Calu3 (cell line): ENCODE measurements at regions of chr2 and their contacts with region 1.

Region 1: DNA sequence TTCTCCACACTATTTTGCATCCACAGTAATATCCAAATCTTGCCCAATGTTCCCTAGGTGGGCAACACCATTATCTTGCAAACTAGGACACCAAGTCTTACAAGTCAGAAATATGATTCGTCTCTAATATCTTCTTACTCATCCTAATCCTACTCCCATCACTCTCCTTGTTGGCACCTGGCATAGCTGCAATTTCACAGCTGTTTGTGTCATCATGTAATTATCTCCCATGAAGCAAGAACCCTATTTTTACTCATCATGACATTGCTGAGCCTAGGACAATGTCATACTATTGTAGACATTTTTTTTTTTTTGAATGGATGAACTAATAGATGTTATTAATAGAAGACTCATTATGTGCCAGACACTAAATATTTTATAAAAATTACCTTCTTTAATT is 91.3 kb upstream of the CCDC141 start:
- DNase-seq: no peak
- H3K4me3 Mint-ChIP-seq: no peak overlapping the region
- H3K27ac Mint-ChIP-seq: no peak overlapping the region
- H3K4me1 Mint-ChIP-seq: no peaks in the 10 kb centered on the region
- H3K27me3 Mint-ChIP-seq: no peaks in the 10 kb centered on the region
- CTCF ChIP-seq: no peak

Region 2: DNA sequence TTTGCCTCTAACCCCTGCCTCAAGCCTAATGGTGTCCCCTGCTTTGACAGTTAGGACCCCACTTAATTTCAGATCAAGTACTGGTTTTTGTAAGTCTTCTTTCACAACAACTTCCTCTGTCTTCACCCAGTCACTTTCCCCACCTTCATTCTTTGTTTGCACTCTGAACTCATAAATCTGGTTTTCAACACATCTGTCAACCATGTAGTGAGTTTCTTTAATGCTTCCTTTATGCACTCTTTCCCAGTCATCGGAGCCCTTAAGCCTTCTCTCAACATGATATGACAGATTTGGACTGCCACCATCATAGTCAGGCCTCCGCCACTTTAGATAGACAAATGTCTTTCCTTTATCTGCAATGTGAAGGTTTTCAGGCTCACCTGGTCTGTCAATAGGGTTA is 551.9 kb before region 1 on chr2:
- CTCF ChIA-PET with region 1: no interaction called
- intact Hi-C with region 1: no loop called
- DNase-seq: no peak
- H3K4me3 Mint-ChIP-seq: no peak overlapping the region
- H3K27ac Mint-ChIP-seq: no peak overlapping the region
- H3K4me1 Mint-ChIP-seq: no peaks in the 10 kb centered on the region
- H3K27me3 Mint-ChIP-seq: no peaks in the 10 kb centered on the region
- CTCF ChIP-seq: no peak

Region 3: DNA sequence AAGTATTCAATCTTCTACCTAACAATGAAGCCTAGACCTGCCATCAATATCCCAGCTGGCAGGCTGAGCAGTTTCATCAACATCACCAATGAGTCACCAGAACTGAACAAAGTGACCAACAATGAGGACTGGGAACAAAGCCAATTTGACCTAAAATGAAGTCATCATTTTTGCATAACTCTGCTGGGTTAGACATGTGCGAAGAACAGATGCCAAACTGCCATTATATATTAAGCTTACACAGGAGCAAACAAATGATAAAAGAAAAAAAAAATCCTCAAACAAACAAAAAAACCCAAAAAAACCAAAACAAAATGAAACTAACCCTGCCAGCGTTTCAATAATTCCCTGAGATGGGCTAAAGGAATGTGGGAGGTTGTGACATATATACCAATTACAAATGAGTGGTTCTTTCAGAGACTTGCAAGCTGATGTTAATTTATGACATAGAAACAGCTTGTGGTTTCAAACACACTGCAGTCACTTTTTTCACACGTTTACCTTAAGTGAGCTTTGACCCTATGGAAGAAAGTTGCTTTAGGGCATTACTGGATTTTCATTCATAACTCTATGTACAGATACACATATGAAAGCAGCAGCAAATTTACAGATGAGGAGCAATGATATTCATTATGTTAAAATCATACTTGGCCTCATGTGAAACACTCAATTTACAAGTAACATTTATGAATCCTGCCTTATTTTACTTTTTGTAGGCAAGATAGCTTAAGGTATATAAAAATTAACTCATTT is 34.4 kb before region 1 on chr2:
- CTCF ChIA-PET with region 1: no interaction called
- intact Hi-C with region 1: loop called (anchors 1 kb)
- DNase-seq: peak; percentile 70
- H3K4me3 Mint-ChIP-seq: peak overlapping the region; percentile 19
- H3K27ac Mint-ChIP-seq: peak overlapping the region; percentile 56
- H3K4me1 Mint-ChIP-seq: peaks cover 41% of the 10 kb centered on the region
- H3K27me3 Mint-ChIP-seq: no peaks in the 10 kb centered on the region
- CTCF ChIP-seq: no peak